ENCODE measurements at regions of chr17 and their contacts with region 1.

Region 1: DNA sequence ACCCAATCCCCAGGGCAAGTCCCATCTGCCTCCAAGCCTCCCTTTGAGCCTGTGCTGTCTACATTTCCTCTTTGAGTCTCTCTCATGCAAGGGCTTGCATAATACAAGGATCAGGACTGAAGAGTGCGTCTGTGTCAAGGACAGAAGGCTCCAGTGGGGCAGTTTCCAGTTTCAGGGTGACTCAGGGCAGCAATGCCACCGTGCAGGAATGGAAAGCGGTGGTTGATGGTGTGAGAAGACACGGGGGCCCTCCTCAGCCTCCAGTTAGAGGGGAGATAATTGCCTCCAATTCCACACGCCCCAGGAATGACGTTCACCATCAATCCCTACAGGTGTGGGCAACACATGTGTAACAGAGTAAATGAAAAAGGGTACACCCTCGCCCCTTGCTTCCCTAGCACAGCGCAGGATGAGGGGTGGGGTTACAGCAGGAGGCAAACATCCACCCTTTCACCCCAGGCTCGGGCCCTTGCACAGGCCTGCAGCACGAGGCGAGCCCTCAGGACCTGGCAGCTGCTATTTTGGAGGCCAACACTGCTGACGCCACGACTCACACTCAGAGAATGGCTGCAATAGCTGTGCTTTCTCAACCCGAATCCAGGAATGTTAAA is 24.8 kb upstream of the SLC25A19 start:
- DNase-seq: peak in 1 of 5 donors; percentile 50
- ATAC-seq: peak in 3 of 4 donors; percentile 47 to 71 (median 68)
- H3K4me3 ChIP-seq: no peak overlapping the region
- H3K27ac ChIP-seq: peak overlapping the region in 8 of 12 donors; percentile 15 to 95 (median 32)
- H3K4me1 ChIP-seq: peaks cover 0 to 95% (median 2%) of the 10 kb centered on the region in 12 donors
- H3K27me3 ChIP-seq: no peaks in the 10 kb centered on the region
- CTCF ChIP-seq: no peak
- POLR2A ChIP-seq: no peak

Region 2: DNA sequence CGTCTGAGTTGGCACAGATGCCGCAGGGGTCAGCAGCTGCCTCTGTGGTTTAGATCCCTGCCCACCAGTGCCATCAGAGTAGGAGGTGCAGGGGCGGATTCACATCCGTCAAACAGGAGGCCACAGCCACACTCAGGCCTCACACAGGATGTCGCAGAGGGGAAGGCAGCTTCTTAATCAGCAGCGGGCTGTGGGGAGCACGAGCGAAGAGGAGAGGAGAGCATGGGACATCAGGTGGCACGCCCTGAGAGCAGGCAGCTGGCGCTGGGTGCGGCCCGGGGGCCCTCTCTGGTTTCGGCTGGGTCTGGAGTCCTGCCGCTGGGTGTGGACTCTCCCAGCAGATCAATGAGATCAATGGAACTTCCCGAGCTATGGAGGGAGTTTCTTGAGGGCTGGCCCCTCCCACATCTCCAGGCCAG is 221.1 kb after region 1 on chr17:
- intact Hi-C with region 1: loop called in 1 of 10 experiments (anchors 10 kb)
- DNase-seq: no peak
- ATAC-seq: peak in 1 of 4 donors; percentile 16
- H3K4me3 ChIP-seq: no peak overlapping the region
- H3K27ac ChIP-seq: peak overlapping the region in 1 of 12 donors; percentile 58
- H3K4me1 ChIP-seq: peaks cover 0 to 7% (median 0%) of the 10 kb centered on the region in 12 donors
- H3K27me3 ChIP-seq: no peaks in the 10 kb centered on the region
- CTCF ChIP-seq: no peak
- POLR2A ChIP-seq: no peak

Region 3: GRCh38 chr17:76371656-76372628 is 1057.9 kb after region 1 on chr17:
- intact Hi-C with region 1: no loop called
- DNase-seq: no peak
- ATAC-seq: no peak
- H3K4me3 ChIP-seq: no peak overlapping the region
- H3K27ac ChIP-seq: no peak overlapping the region
- H3K4me1 ChIP-seq: peaks cover 0 to 38% (median 26%) of the 10 kb centered on the region in 12 donors
- H3K27me3 ChIP-seq: no peaks in the 10 kb centered on the region
- CTCF ChIP-seq: no peak
- POLR2A ChIP-seq: no peak

Measured in heart left ventricle (tissue), 16 donors.